Thyroid gland (tissue), 4 donors: ENCODE measurements at regions of chr1 and their contacts with region 1.

Region 1: GRCh38 chr1:201709564-201710295 is 119.2 kb upstream of the IPO9 start:
- DNase-seq: peak; percentile 61 to 72
- H3K4me3 ChIP-seq: no peak overlapping the region
- H3K27ac ChIP-seq: peak overlapping the region in 1 of 3 donors; percentile 47
- H3K4me1 ChIP-seq: peaks cover 11 to 47% of the 10 kb centered on the region in 2 donors
- H3K27me3 ChIP-seq: no peaks in the 10 kb centered on the region
- CTCF ChIP-seq: peak; percentile 90 to 92 (median 92)
- POLR2A ChIP-seq: no peak

Region 2: GRCh38 chr1:201792534-201793305 is 83.0 kb after region 1 on chr1:
- intact Hi-C with region 1: loop called (anchors 2 kb)
- DNase-seq: peak; percentile 79 to 82
- H3K4me3 ChIP-seq: no peak overlapping the region
- H3K27ac ChIP-seq: peak overlapping the region in 2 of 3 donors; percentile 56 to 58
- H3K4me1 ChIP-seq: peaks cover 0 to 34% of the 10 kb centered on the region in 2 donors
- H3K27me3 ChIP-seq: no peaks in the 10 kb centered on the region
- CTCF ChIP-seq: peak; percentile 93 to 99 (median 97)
- POLR2A ChIP-seq: no peak